ENCODE measurements at regions of chr5 and their contacts with region 1.

Region 1: GRCh38 chr5:126341906-126342630 is 81.1 kb upstream of the GRAMD2B start:
- DNase-seq: no peak
- ATAC-seq: no peak
- H3K4me3 ChIP-seq: no peak overlapping the region
- H3K27ac ChIP-seq: no peak overlapping the region
- H3K4me1 ChIP-seq: no peaks in the 10 kb centered on the region
- H3K27me3 ChIP-seq: no peaks in the 10 kb centered on the region
- CTCF ChIP-seq: no peak

Region 2: GRCh38 chr5:126594676-126595485 is 252.8 kb after region 1 on chr5 and contains the start of gene ALDH7A1:
- intact Hi-C with region 1: loop called (anchors 5 kb)
- DNase-seq: peak; percentile 91
- ATAC-seq: peak; percentile 96
- H3K4me3 ChIP-seq: peak within 1 kb of the TSS; percentile 75
- H3K27ac ChIP-seq: peak within 1 kb of the TSS; percentile 80
- H3K4me1 ChIP-seq: peaks cover 9% of the 10 kb centered on the region
- H3K27me3 ChIP-seq: no peaks in the 10 kb centered on the region
- CTCF ChIP-seq: peak; percentile 51
- total RNA-seq, gene ALDH7A1: 26.1 TPM

Measured in upper lobe of right lung (tissue), 1 donor.